ENCODE measurements at regions of chr3 and their contacts with region 1.

Region 1: GRCh38 chr3:197711973-197712707 is 24.6 kb downstream of the RUBCN start:
- DNase-seq: peak; percentile 83 to 92
- ATAC-seq: peak; percentile 82 to 89
- H3K4me3 ChIP-seq: peak overlapping the region; percentile 25 to 54 (median 46)
- H3K27ac ChIP-seq: peak overlapping the region; percentile 89 to 97 (median 90)
- H3K4me1 ChIP-seq: peaks cover 22 to 24% of the 10 kb centered on the region in 2 donors
- H3K27me3 ChIP-seq: no peaks in the 10 kb centered on the region
- CTCF ChIP-seq: no peak
- POLR2A ChIP-seq: peak; percentile 39 to 54

Region 2: DNA sequence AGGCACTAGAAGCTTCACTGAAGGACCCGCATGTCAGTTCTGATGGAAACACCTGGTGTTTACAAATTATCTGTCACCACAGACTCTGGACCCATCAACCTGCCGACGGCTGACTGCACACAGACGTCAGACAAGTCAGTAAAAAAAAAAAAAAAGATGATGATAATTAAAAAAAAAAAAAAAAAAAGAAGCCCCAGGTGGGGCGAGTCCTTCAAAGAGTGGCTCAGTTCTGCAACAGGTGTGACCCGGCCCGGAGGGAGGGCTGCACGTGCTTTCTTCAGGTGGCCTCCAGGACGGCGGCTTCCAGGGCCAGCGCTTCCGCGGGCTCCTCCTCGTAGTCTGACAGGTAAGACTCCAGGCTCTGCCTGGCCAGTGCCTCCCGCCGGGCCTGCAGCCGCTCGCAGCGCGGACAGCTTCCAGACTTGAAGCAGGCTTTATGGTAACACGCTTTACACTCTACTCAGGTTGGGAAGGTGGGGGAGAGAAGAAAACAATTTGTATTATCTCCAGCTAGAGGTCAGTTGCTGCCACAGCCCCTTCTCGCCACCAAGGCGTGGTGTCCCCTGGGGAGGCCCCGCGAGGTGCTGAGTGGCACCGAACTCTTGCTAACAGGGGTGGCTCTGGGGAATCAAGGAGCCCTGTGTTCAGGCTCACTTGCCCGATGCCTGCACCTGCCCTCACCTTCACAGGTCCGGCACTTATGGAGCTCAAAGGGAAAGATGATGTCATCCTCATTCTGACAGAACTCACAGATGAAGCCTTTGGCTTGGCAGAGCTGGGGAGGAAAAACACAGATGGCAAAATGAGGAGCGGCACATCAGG is 37.2 kb before region 1 on chr3:
- in situ Hi-C with region 1: no loop called
- intact Hi-C with region 1: no loop called
- DNase-seq: no peak
- ATAC-seq: no peak
- H3K4me3 ChIP-seq: no peak overlapping the region
- H3K27ac ChIP-seq: no peak overlapping the region
- H3K4me1 ChIP-seq: no peaks in the 10 kb centered on the region
- H3K27me3 ChIP-seq: no peaks in the 10 kb centered on the region
- CTCF ChIP-seq: no peak
- POLR2A ChIP-seq: no peak

Region 3: GRCh38 chr3:197736491-197737318 is 24.6 kb after region 1 on chr3 and contains the start of gene RUBCN:
- in situ Hi-C with region 1: no loop called
- intact Hi-C with region 1: loop called (anchors 2 kb)
- DNase-seq: peak; percentile 95 to 96
- ATAC-seq: peak; percentile 88 to 89
- H3K4me3 ChIP-seq: peak within 1 kb of the TSS; percentile 77 to 98 (median 92)
- H3K27ac ChIP-seq: peak within 1 kb of the TSS; percentile 86 to 95 (median 92)
- H3K4me1 ChIP-seq: peaks cover 17 to 21% of the 10 kb centered on the region in 2 donors
- H3K27me3 ChIP-seq: no peaks in the 10 kb centered on the region
- CTCF ChIP-seq: peak in 2 of 5 experiments; percentile 10 to 20
- POLR2A ChIP-seq: peak; percentile 93 to 97
- total RNA-seq, gene RUBCN: 15.6 to 33.1 (median 21.6) TPM

Region 4: DNA sequence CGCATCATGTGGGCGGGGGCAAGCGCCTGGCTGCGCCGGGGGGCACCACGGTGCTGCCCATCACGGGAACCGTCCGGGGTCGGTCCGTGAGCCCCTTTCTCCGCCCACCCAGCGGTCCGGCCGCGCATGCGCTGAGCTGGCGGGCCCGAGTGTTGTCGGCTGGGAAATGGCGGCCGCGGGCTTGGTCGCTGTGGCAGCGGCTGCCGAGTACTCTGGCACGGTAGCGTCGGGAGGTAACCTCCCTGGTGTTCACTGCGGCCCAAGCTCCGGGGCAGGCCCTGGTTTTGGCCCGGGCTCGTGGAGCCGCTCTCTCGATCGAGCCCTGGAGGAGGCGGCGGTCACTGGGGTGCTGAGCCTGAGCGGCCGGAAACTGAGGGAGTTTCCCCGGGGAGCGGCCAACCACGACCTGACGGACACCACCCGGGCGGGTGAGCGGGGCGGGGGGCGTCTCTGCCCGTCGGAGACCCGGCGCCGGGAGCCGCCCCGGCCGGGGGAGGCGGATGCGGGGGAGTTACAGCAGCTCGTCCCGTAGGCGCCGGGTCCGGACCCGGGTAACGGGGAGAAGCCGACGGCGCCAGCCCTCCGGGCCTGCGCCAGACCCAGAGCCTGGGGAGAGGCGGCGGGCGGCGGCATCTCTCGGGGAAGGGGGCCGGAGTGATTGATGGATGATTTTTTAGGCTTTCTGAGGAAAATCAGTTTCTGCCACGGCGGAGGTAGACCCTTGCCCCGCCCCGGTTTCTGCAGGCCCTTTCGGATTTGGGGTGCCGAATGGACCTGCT is 79.2 kb after region 1 on chr3 and contains the start of gene LRCH3:
- in situ Hi-C with region 1: no loop called
- intact Hi-C with region 1: loop called (anchors 5 kb)
- DNase-seq: peak; percentile 50 to 59
- ATAC-seq: peak; percentile 82 to 88
- H3K4me3 ChIP-seq: peak within 1 kb of the TSS; percentile 79 to 98 (median 87)
- H3K27ac ChIP-seq: peak within 1 kb of the TSS; percentile 89 to 99 (median 94)
- H3K4me1 ChIP-seq: peaks cover 34 to 39% of the 10 kb centered on the region in 2 donors
- H3K27me3 ChIP-seq: no peaks in the 10 kb centered on the region
- CTCF ChIP-seq: no peak
- POLR2A ChIP-seq: peak; percentile 42 to 74
- total RNA-seq, gene LRCH3: 18.0 to 126 (median 26.7) TPM

Measured in gastrocnemius medialis (tissue), 4 donors.